GM18951 (cell line): ENCODE measurements at regions of chr16 and their contacts with region 1.

Region 1: GRCh38 chr16:84186685-84187437 is at the start of gene TAF1C:
- POLR2A ChIP-seq: peak; percentile 88

Region 2: GRCh38 chr16:83952940-83953795 is 233.7 kb before region 1 on chr16 and contains the start of gene OSGIN1:
- in situ Hi-C with region 1: loop called (anchors 25 kb)
- POLR2A ChIP-seq: peak; percentile 51

Region 3: DNA sequence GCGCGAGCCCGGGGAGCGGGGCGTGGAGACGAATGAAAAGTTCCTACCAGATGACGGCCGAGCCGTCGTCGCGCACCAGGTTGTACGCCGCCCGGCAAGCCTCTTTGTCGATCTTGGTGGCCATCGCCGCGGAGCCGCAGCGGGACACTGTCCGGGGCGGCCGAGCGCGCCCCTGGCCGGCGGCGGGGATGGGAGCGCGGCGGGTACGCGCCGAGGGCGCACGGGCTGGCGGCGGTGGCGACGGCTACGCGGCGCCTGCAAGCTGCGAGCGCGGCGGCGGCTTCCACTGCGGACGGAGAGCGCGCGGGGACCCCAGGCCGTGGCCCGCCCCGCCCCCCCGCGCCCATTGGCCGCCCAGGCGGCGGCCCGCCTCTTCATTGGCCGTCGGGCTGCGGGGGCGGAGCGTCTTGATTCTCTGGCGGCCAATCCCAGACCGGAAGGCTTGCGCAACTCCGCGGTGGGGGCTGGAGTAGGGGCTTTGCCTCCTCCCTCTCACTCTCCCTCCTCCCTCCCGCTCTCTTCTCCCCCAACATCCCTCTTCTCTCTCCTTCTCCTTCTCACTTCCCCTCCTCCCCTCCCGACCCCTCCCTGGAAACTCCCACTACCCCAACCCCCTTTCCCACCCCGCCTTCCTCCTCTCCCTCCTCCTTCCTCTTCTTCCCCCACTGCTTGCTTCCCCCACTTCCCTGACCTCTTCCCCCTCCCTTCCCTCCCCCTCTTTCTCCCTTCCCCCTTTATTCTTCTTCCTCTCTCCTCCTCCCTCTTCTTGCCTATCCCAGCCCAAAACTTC is 431.1 kb after region 1 on chr16 and contains the start of gene COTL1:
- in situ Hi-C with region 1: no loop called
- POLR2A ChIP-seq: peak; percentile 98